GM12878 (cell line): ENCODE measurements at regions of chr2 and their contacts with region 1.

Region 1: DNA sequence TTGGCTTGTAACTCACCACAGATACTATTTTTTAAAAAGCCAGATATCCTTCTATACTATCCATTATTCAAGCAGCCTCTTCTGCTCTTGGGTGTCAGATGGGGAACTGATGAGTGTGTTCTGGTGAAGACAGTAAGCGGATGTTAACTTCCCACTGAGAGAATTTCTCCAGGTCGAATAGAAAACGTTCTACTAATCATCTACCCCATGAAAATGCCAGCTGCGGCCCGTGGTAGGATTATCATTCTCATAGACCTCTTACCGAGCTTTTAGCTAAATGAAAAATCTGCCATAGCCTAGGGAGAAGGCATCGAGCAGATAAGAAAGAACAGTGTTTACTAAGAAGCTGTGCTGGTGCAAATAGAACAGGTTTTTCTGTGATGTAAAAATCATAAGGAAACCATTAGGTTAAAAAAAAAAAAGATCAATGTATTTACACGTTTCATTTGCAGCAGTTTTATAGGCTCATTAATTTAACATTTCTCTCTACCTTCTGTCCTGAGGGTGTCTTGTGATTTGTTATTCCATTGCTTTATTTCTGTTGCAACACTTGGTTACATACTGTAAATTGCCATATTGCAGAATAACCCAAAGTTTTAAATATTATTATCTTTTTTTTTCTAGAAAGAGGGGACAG is 1521.5 kb upstream of the ZEB2 start:
- DNase-seq: no peak
- ATAC-seq: no peak
- H3K4me3 ChIP-seq: no peak overlapping the region
- H3K27ac ChIP-seq: no peak overlapping the region
- H3K4me1 ChIP-seq: no peaks in the 10 kb centered on the region
- H3K27me3 ChIP-seq: no peaks in the 10 kb centered on the region
- CTCF ChIP-seq: no peak
- EP300 ChIP-seq: no peak
- POLR2A ChIP-seq: no peak
- RAD21 ChIP-seq: no peak

Region 2: DNA sequence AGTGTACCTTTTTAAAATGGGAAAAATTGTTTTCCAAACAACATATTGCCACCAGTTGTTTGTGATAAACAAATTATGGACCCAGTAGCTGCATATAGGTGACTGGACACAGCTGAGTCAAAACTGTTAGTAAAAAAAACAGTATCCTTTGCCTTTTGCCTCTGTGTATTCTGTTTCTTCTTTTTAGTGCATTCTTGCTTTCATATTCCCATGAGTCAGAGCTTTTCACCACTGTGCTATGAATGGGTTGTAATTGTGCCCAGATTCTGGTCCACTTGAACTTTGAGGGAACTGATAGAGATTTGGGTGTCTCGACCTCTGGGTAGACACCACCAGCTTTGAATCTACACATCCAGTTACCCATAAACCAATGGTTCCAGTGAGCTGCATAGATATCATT is 79.5 kb before region 1 on chr2:
- CTCF ChIA-PET with region 1: no interaction called
- POLR2A ChIA-PET with region 1: no interaction called
- RAD21 ChIA-PET with region 1: no interaction called
- SMC1A ChIA-PET with region 1: no interaction called
- in situ Hi-C with region 1: no loop called
- intact Hi-C with region 1: no loop called
- DNase-seq: no peak
- ATAC-seq: no peak
- H3K4me3 ChIP-seq: no peak overlapping the region
- H3K27ac ChIP-seq: no peak overlapping the region
- H3K4me1 ChIP-seq: no peaks in the 10 kb centered on the region
- H3K27me3 ChIP-seq: no peaks in the 10 kb centered on the region
- CTCF ChIP-seq: no peak
- EP300 ChIP-seq: no peak
- POLR2A ChIP-seq: no peak
- RAD21 ChIP-seq: no peak

Region 3: DNA sequence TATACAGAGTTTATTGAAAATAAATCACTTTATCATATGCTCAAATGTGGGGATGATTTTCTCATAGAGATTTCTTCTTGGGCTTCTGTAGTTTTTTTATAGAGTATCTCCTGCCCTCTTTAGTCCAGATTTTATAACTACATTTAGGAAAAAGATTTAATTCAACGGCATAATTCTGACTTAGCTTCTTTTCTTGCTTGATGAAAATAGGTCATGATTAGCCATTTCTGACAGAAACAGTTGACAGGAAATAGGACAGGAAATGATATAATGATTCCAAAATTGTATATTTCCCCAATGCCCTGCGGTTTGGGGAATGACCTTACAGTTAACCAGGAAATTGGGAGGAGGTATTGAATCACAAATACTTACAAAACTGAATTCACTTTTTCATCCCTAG is 271.5 kb after region 1 on chr2:
- CTCF ChIA-PET with region 1: interaction called, 3 read pairs
- POLR2A ChIA-PET with region 1: no interaction called
- RAD21 ChIA-PET with region 1: interaction called, 4 read pairs
- SMC1A ChIA-PET with region 1: no interaction called
- in situ Hi-C with region 1: no loop called
- intact Hi-C with region 1: loop called (anchors 10 kb)
- DNase-seq: no peak
- ATAC-seq: peak; percentile 45; the same call in 2 of the 3 replicates
- H3K4me3 ChIP-seq: no peak overlapping the region
- H3K27ac ChIP-seq: no peak overlapping the region
- H3K4me1 ChIP-seq: no peaks in the 10 kb centered on the region
- H3K27me3 ChIP-seq: no peaks in the 10 kb centered on the region
- CTCF ChIP-seq: no peak; a peak in 1 of 6 replicates
- EP300 ChIP-seq: no peak
- POLR2A ChIP-seq: no peak
- RAD21 ChIP-seq: peak; percentile 30; the same call in 1 of the 2 replicates

Region 4: GRCh38 chr2:146370826-146371225 is 329.4 kb after region 1 on chr2:
- CTCF ChIA-PET with region 1: no interaction called
- POLR2A ChIA-PET with region 1: no interaction called
- RAD21 ChIA-PET with region 1: no interaction called
- SMC1A ChIA-PET with region 1: no interaction called
- in situ Hi-C with region 1: no loop called
- intact Hi-C with region 1: no loop called
- DNase-seq: no peak
- ATAC-seq: no peak
- H3K4me3 ChIP-seq: no peak overlapping the region
- H3K27ac ChIP-seq: no peak overlapping the region
- H3K4me1 ChIP-seq: no peaks in the 10 kb centered on the region
- H3K27me3 ChIP-seq: no peaks in the 10 kb centered on the region
- CTCF ChIP-seq: no peak
- EP300 ChIP-seq: no peak
- POLR2A ChIP-seq: no peak
- RAD21 ChIP-seq: no peak